Activated CD4-positive, alpha-beta T cell treated with anti-CD3 and anti-CD28 coated beads, Interleukin-2, amount 10 ng/mL, durations not matched to agents 24 days and 14 days (primary cell): ENCODE measurements at regions of chr3 and their contacts with region 1.

Region 1: DNA sequence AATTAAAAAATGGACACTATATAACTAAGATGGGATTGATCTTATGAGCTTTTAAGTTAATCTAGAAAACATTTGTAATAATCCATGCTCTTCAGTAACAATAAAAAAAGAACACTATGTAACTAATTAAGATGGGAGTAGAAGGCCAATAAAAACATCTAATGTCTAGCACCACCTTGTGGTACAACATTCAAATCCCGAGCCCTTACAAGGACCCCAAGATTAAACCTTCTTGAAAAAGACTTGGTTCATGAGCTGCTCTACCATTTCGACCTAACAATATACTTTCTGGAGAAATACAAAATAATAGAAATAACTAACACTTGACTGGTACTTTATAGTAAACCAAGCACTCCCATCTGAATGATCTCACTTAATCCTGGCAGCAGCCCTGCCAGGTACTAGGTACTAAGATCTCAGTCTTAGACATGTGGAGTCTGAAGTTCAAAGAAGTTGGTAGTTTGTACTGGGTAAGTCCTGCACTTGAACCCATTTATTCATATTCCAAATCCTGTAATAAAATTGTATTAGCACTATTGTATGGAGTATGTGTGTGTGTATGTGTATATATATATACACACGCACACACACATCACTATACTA is 21.8 kb downstream of the METTL6 start:
- DNase-seq: peak; percentile 77
- H3K4me3 Mint-ChIP-seq: no peak overlapping the region
- H3K27ac Mint-ChIP-seq: no peak overlapping the region
- H3K4me1 Mint-ChIP-seq: peaks cover 6% of the 10 kb centered on the region
- H3K27me3 Mint-ChIP-seq: no peaks in the 10 kb centered on the region

Region 2: DNA sequence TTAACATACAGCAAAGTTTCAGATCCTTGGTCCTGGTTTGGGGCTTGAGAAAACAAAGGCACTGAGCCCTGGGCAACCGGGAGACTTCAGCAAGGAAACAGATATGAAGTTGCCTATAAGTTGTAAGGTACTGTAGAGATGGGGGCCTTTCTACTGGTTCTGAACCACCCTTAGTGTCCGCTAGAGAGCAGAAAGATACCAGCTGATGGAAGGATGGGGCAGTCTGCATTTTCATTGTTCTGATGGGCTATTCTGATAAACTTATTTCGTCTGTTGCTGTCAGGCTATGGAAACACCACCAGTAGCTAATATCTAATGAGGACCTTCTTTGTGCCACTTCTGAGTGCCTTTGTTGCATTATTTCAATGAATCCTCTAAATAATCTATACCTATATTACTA is 548.0 kb before region 1 on chr3:
- intact Hi-C with region 1: no loop called
- DNase-seq: no peak
- H3K4me3 Mint-ChIP-seq: no peak overlapping the region
- H3K27ac Mint-ChIP-seq: no peak overlapping the region
- H3K4me1 Mint-ChIP-seq: no peaks in the 10 kb centered on the region
- H3K27me3 Mint-ChIP-seq: peaks cover 32% of the 10 kb centered on the region

Region 3: GRCh38 chr3:15108082-15108545 is 297.4 kb before region 1 on chr3:
- intact Hi-C with region 1: loop called (anchors 1 kb)
- DNase-seq: peak; percentile 92
- H3K4me3 Mint-ChIP-seq: no peak overlapping the region
- H3K27ac Mint-ChIP-seq: no peak overlapping the region
- H3K4me1 Mint-ChIP-seq: peaks cover 8% of the 10 kb centered on the region
- H3K27me3 Mint-ChIP-seq: peaks cover 16% of the 10 kb centered on the region